ENCODE measurements at regions of chr2 and their contacts with region 1.

Region 1: GRCh38 chr2:117179405-117179804 is 635.1 kb upstream of the DDX18 start:
- DNase-seq: no peak

Region 2: DNA sequence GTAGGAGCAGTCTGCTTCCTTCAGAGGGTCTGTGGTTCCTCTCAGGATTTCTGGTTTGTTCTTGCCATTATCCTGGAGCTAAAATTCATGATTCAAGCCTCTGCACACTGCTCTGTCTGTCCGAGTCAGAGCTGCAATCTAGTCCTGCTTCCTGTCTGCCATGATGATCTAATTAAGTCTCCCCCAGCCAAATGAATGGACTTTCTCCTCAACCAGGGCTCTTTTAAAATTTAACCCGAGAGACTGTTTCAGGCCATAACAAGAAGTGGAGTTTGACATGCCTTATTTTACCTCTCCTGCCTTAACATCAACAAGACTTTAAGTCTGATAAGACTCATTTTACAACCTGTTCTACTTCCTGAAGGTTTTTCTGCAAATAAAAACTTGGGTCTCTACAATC is 374.5 kb before region 1 on chr2:
- intact Hi-C with region 1: loop called in 1 of 2 experiments (anchors 5 kb)
- DNase-seq: no peak

Region 3: DNA sequence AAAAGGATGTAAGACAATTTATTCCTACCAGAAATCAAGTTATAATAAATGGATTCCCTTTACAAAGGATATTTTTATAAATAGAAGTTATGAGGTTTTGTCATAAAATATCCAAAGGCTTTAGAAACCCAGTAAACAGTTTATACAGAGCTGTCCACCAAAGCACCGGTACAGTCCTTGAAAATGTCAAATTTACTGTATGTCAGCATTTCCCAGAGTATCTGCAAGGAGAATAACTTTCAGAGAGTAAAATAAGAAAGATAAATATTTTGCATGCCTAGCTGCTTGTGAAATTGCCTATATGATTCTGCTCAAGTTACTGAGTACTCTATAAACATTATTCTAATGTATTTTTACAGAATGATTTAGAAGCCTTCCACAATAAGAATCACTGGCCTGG is 288.2 kb before region 1 on chr2:
- intact Hi-C with region 1: no loop called
- DNase-seq: no peak

Measured in posterior vena cava (tissue), 2 donors.